HEK293T (cell line): ENCODE measurements at regions of chr6 and their contacts with region 1.

Region 1: DNA sequence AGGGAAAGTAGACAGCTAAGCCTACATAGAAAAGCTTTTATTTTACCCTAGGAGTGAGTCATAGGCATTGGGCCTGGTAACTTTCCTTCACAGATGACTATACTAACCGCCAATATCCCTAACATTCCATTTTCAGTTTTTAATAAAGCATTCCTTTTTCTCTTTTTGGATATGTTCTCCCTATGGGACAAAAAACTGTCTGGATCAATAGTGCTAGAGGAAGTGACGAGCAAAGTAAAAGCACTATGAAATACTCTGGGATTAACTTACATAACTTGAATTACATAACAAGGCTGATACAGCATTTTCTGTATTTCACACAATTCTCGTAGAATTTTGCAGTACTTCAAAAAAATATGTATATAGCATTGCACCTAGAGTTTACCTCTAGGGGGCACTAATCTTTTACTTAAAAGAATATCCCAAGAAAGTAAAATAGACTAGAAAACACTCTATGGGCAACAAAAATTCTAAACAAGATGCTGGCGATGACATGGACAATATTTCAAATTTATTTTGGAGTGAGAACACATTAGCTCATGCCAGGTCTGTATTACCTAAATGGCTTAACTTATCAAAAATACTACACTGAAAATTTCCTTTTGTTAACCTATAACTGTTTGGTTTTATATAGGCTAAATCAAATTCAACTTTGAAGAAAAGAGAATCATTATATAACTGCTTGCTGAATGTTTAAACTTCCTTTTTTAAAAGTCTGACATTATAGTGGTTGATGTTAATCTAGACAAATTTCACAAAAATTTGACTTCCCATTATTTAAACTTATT is 66.3 kb upstream of the DST start:
- DNase-seq: peak; percentile 19

Region 2: DNA sequence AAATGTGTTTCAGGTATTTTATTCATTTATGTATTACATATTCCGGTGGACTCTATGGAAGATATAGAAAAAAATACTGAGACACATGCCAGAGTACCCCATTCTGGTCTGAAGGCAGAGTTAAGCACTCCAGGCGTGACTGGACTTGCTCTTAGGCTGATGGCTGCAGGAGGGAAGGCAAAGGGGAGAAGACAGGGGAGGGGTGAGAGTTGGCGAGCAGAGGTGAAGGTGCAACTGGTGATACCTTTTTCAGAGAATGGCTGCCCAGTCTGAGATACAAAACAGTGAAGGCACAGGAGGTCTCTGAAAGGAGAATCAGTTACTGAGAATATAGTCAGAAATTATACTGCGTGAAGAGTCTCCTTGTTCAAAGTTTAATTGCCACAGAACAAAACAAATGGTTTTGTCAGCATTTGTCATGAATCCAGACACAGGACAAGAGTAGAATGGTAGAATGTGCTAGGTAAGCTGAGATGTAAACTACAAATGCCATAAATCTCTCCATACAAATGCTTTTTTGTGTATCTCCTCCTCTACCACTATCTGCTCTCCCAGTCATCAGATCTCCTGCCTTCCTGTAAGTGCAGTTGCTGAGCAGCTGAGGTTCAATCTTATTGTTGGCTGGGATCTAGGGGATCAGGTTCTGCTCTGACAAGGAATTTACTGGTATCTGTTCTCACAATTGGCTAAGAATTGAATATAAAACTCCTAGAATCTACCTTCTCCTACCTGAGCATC is 37.9 kb after region 1 on chr6:
- CTCF ChIA-PET with region 1: no interaction called
- POLR2A ChIA-PET with region 1: no interaction called
- DNase-seq: no peak

Region 3: GRCh38 chr6:56757588-56757984 is 48.6 kb after region 1 on chr6:
- CTCF ChIA-PET with region 1: interaction called, 11 read pairs
- POLR2A ChIA-PET with region 1: no interaction called
- DNase-seq: peak; percentile 26

Region 4: DNA sequence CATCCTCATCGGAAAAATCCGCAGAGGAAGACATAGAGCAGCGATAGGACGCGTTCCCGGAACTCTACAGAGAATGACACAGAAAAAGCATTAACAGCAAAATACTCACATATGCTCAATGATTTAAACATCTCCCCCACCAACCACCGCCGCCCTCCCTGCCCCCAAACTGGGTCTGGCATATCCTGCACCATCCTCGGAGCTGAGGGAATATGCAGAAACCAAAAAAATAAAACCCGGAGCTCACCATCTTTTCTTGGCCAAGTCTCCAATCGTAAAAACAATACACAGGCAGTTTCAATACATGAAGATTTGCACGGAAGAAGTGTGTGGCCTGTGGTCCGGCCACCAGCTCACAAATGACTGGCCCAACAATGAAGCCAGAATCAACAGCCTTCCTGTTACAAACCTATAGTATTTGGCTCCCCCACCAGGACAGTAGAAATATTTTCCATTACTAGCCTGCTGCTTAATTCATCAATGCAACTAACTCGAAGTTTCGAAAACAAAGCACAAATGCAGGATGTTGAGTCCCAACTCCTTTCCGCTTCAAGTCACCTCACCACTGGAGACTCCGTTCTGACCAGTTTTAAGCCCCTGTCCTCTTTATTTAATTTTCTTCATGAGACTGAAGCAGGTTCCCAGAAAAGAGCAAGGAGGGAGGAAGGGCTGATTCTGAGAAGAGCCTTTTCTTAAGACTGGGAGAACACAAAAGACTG is 142.7 kb after region 1 on chr6:
- CTCF ChIA-PET with region 1: interaction called, 18 read pairs
- POLR2A ChIA-PET with region 1: no interaction called
- DNase-seq: peak; percentile 64